Ovary (tissue), 10 donors: ENCODE measurements at regions of chr11 and their contacts with region 1.

Region 1: DNA sequence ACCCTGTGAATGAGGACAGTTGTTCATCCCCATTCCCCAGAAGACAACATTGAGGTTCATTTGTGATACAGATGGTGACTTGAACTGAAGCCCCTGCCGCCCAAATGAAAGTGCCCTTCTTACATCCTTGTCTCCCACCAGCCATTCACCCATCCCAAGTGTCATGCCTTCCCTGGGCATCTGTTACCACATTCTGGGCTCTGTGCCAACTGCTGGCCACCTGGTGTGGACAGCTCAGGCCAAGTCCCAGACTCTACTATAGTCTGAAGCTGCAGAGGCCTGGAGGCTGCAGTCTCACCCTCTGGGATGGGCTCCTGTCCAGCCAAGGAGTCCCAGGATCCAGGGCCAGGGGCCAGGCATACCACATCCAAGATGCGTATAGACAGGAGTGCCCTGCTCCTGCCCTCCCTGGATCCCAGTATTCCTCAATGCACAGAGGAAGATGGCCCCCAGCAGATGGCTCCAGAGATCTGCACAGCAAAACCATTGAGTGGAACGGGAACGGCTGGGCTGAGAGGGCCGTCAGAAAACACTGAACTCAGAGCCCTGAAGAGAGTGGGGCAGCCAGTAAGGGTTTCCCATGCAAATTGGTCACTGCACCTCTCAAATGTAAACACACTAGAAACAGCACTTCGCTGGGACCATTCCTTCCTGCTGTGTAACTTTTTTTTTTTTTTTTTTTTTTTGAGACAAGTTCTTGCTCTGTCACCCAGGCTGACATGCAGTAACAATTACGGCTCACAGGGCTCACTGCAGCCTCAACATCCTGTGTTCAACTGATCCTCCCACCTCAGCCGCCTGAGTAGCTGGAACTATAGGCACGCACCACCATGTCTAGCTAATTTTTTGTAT is 22.8 kb downstream of the ARRB1 start:
- DNase-seq: peak; percentile 68 to 78 (median 72)
- H3K4me3 ChIP-seq: no peak overlapping the region
- H3K27ac ChIP-seq: no peak overlapping the region
- H3K4me1 ChIP-seq: peaks cover 8% of the 10 kb centered on the region
- H3K27me3 ChIP-seq: no peaks in the 10 kb centered on the region
- CTCF ChIP-seq: peak; percentile 13 to 72 (median 68)
- EP300 ChIP-seq: no peak
- POLR2A ChIP-seq: no peak

Region 2: GRCh38 chr11:75388386-75389275 is 60.0 kb after region 1 on chr11:
- intact Hi-C with region 1: loop called (anchors 2 to 5 kb)
- DNase-seq: peak; percentile 55 to 74 (median 72)
- H3K4me3 ChIP-seq: no peak overlapping the region
- H3K27ac ChIP-seq: no peak overlapping the region
- H3K4me1 ChIP-seq: no peaks in the 10 kb centered on the region
- H3K27me3 ChIP-seq: no peaks in the 10 kb centered on the region
- CTCF ChIP-seq: peak; percentile 61 to 72 (median 68)
- EP300 ChIP-seq: no peak
- POLR2A ChIP-seq: no peak

Region 3: DNA sequence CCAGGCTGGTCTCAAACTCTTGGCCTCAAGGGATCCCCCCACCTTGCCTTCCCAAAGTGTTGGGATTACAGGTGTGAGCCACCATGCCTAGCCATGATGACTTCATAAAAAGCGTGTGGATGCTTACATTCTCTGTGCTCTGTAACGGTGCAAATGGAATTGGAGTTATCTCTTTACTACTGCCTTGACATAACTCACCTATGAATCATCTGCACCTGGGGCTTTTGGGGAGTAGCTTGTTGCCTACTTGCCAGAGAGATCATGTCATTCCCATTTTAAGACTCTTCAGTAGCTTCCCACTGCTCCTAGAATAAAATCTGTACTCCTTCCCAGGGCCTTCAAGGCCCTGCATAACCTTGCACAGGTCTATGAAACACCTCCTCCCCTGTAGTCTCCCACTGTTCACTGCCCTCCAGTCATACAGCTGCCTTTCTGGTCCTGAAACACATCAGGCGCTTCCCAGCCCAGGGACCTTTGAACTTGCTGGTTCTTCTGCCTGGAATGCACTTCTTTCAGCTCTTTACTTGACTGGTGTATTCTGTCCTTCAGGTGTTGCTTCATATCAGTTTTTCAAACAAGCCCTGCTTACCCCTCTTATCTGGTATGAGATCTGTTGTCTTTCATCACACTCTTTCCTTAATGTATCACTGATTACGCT is 369.4 kb after region 1 on chr11:
- intact Hi-C with region 1: no loop called
- DNase-seq: no peak
- H3K4me3 ChIP-seq: no peak overlapping the region
- H3K27ac ChIP-seq: no peak overlapping the region
- H3K4me1 ChIP-seq: no peaks in the 10 kb centered on the region
- H3K27me3 ChIP-seq: no peaks in the 10 kb centered on the region
- CTCF ChIP-seq: no peak
- EP300 ChIP-seq: no peak
- POLR2A ChIP-seq: no peak